ENCODE measurements at regions of chr9 and their contacts with region 1.

Region 1: DNA sequence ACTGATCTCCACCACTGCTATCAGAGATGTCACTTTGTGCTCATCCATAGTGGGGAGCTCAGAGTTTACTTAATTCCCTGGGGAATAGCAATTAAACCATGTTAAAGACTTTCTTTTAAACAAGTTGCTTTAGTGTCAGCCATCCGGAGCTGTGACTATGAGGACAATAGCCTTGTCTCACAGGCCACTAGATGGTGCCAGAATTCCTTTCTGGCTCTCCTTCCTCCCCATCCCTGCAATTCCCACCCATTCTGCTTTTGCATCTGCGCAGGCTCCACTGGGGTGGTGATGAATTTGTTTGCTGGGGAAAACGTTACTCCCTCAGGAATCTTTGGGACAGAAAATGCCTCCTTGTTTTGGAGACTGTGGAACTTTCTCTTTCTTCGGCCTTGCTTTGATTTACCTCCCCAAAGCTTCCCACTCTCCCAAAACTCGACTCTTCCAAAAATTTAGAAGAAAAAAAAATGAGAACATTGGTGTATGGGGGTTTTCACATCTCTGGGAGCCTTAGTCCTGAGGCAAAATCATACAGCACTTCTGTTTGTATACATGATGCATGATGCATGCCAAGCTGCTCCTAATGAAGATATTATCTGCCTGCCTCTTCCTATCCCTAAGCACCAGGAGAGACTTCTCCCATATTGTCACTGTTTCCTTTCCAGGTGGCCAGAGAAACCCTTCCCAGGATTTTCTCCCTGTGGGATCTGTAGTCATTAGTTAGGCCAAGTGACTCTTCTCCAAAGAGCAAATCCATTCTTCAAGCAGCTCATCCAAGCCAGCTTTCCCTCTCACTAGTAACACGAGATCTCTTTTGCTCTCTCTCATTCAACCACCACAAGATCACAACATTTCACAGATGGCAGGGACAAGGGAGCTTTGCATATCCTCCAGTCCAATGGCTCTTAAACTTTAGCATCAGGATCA is 466.1 kb downstream of the TLR4 start:
- DNase-seq: peak; percentile 53
- H3K4me3 ChIP-seq: no peak overlapping the region
- H3K27ac ChIP-seq: no peak overlapping the region
- H3K4me1 ChIP-seq: no peaks in the 10 kb centered on the region
- H3K27me3 ChIP-seq: no peaks in the 10 kb centered on the region
- CTCF ChIP-seq: peak; percentile 87 to 91

Region 2: DNA sequence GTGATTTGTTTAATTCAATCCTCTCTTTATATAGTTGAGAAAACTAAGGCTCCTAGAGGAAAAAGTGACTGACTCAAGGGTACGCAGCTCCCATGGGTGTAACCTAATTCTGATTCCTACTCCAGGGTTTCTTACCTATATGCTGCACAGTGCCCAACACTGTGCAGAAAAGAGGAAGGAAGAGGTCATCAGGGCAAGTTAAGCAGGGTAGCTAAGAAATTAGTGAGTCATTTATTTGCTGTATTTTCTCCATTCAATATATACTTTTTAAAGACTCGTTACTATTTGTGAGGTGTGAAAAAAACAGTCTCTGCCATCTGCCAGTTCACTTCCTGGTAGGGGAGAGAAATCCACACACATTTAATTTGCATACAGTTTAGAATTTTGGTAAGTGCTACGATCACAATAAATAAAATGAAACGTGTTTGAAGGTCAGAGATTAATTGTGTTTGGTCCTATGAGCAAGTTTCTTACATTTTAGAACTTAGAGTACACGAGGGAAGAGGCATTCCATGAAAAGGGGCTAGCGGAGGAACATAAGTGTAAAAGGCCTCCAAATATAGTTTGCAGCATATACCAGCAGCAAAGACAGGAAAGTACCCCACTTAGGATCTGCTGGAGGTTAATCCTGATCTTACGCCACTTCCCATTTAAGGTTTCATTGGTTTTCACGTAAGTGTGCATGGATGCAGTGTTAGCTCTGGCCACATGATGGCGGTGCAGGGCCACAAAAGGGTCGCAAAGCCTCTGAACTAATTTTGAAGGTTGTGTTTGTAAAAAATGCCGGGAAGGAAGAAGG is 526.0 kb before region 1 on chr9:
- CTCF ChIA-PET with region 1: no interaction called
- dilution Hi-C with region 1: no loop called
- in situ Hi-C with region 1: loop called in 1 of 2 experiments (anchors 25 kb)
- intact Hi-C with region 1: loop called (anchors 1 kb)
- DNase-seq: peak; percentile 55
- H3K4me3 ChIP-seq: peak overlapping the region; percentile 5 to 36 (median 24)
- H3K27ac ChIP-seq: no peak overlapping the region
- H3K4me1 ChIP-seq: no peaks in the 10 kb centered on the region
- H3K27me3 ChIP-seq: peaks cover 5% of the 10 kb centered on the region
- CTCF ChIP-seq: peak; percentile 98 to 99

Region 3: GRCh38 chr9:117782931-117783788 is 387.1 kb before region 1 on chr9:
- CTCF ChIA-PET with region 1: no interaction called
- dilution Hi-C with region 1: no loop called
- in situ Hi-C with region 1: no loop called
- intact Hi-C with region 1: loop called (anchors 1 kb)
- DNase-seq: peak; percentile 71
- H3K4me3 ChIP-seq: peak overlapping the region; percentile 54 to 72 (median 55)
- H3K27ac ChIP-seq: no peak overlapping the region
- H3K4me1 ChIP-seq: peaks cover 7% of the 10 kb centered on the region
- H3K27me3 ChIP-seq: no peaks in the 10 kb centered on the region
- CTCF ChIP-seq: peak; percentile 92 to 93

Region 4: GRCh38 chr9:117796681-117797080 is 373.6 kb before region 1 on chr9:
- CTCF ChIA-PET with region 1: no interaction called
- dilution Hi-C with region 1: no loop called
- in situ Hi-C with region 1: no loop called
- intact Hi-C with region 1: no loop called
- DNase-seq: no peak
- H3K4me3 ChIP-seq: no peak overlapping the region
- H3K27ac ChIP-seq: no peak overlapping the region
- H3K4me1 ChIP-seq: no peaks in the 10 kb centered on the region
- H3K27me3 ChIP-seq: no peaks in the 10 kb centered on the region
- CTCF ChIP-seq: no peak

Region 5: DNA sequence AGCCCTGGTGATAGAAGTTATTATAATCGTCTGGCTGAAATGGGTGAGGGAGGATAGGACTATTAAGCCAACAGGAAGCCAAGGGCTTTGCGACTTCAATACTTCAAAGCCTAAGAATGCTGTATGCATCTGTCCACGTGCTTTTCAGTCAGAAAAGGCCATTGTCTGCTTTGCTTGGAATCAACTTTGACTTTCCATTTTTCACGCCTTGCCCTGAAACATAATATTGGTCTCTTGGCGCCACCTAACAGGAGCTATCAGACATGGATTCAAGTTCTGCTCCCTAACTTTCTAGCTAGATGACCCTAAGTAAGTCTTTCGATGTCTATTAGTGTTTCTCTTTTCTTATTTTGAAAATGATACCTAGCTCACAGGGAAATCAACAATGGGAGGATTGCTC is 106.5 kb after region 1 on chr9:
- CTCF ChIA-PET with region 1: no interaction called
- dilution Hi-C with region 1: no loop called
- in situ Hi-C with region 1: no loop called
- intact Hi-C with region 1: loop called (anchors 2 kb)
- DNase-seq: no peak
- H3K4me3 ChIP-seq: no peak overlapping the region
- H3K27ac ChIP-seq: no peak overlapping the region
- H3K4me1 ChIP-seq: no peaks in the 10 kb centered on the region
- H3K27me3 ChIP-seq: no peaks in the 10 kb centered on the region
- CTCF ChIP-seq: no peak

Region 6: DNA sequence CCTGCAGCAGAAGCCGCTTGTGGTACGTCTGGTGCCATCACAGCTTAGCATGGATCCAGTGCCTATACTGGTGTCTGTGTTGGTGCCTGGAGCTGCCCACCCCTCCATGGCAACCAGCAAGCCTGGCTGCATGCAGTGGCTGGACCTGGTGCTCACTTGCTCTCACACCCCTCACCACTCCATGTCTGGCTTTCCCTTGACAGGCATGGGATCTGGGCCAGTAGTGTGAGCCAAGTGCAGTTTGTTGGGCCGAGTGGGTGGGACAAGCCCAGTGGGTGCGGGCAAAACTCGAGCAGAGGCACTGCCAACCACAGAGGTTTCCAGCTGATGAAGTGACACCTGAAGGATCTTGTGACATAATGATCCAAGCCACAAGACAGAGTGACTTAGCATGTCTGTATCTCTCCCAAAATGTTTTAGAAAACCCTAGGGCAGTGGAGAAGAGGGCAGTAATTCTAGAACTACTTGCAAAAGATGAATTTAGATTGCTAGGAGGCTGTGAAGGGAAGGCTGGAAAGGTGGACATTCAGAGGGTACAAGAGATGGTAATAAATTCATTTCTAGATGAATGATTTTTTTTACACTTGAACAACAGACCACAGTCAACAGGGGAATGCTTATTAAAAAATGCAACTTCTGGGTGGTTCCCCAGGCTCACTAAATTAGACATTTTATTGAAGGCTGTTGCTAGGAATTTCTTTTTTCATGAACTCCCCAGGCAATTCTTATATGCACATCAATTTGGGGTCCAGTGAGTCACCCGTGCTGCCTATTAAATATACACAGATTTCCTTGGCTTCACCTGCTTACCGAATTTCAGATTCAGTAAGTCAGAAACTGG is 194.2 kb after region 1 on chr9:
- CTCF ChIA-PET with region 1: no interaction called
- dilution Hi-C with region 1: no loop called
- in situ Hi-C with region 1: no loop called
- intact Hi-C with region 1: loop called (anchors 1 kb)
- DNase-seq: no peak
- H3K4me3 ChIP-seq: no peak overlapping the region
- H3K27ac ChIP-seq: no peak overlapping the region
- H3K4me1 ChIP-seq: peaks cover 5% of the 10 kb centered on the region
- H3K27me3 ChIP-seq: no peaks in the 10 kb centered on the region
- CTCF ChIP-seq: no peak

Region 7: GRCh38 chr9:118595719-118596305 is 425.5 kb after region 1 on chr9:
- CTCF ChIA-PET with region 1: no interaction called
- dilution Hi-C with region 1: no loop called
- in situ Hi-C with region 1: no loop called
- intact Hi-C with region 1: loop called (anchors 5 kb)
- DNase-seq: peak; percentile 60
- H3K4me3 ChIP-seq: no peak overlapping the region
- H3K27ac ChIP-seq: no peak overlapping the region
- H3K4me1 ChIP-seq: no peaks in the 10 kb centered on the region
- H3K27me3 ChIP-seq: no peaks in the 10 kb centered on the region
- CTCF ChIP-seq: peak; percentile 60 to 77

Region 8: DNA sequence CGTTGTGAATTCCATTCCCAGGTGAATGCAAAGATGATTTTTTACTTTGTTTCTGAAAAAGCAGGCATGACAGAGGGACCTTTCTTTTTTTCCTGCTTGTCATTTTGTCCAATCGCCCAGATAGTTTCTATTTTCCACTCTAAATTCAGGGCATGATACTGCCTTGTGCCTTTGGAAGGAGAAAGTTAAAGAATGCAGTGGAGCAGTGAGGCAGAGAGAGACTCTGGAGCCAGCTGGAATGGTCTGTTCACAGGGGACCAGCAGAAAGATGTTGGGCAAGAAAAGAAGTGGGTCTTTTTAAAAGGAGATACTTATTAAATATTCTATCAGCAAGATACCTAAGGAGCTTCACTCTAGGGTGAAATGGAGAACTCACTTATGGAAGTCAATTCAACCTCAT is 666.6 kb after region 1 on chr9:
- CTCF ChIA-PET with region 1: no interaction called
- dilution Hi-C with region 1: no loop called
- in situ Hi-C with region 1: no loop called
- intact Hi-C with region 1: no loop called
- DNase-seq: no peak
- H3K4me3 ChIP-seq: no peak overlapping the region
- H3K27ac ChIP-seq: no peak overlapping the region
- H3K4me1 ChIP-seq: no peaks in the 10 kb centered on the region
- H3K27me3 ChIP-seq: no peaks in the 10 kb centered on the region
- CTCF ChIP-seq: no peak

Region 9: GRCh38 chr9:119289740-119290433 is 1119.6 kb after region 1 on chr9:
- CTCF ChIA-PET with region 1: no interaction called
- dilution Hi-C with region 1: no loop called
- in situ Hi-C with region 1: no loop called
- intact Hi-C with region 1: loop called (anchors 10 kb)
- DNase-seq: peak; percentile 50
- H3K4me3 ChIP-seq: no peak overlapping the region
- H3K27ac ChIP-seq: no peak overlapping the region
- H3K4me1 ChIP-seq: no peaks in the 10 kb centered on the region
- H3K27me3 ChIP-seq: no peaks in the 10 kb centered on the region
- CTCF ChIP-seq: peak; percentile 49 to 66